ENCODE measurements at regions of chr3 and their contacts with region 1.

Region 1: GRCh38 chr3:66500576-66501482 is at the start of gene LRIG1:
- DNase-seq: peak; percentile 100
- ATAC-seq: peak; percentile 95 to 99 (median 95)
- H3K4me3 ChIP-seq: peak within 1 kb of the TSS; percentile 97
- H3K27ac ChIP-seq: peak within 1 kb of the TSS; percentile 95
- H3K4me1 ChIP-seq: peaks cover 24% of the 10 kb centered on the region
- H3K27me3 ChIP-seq: no peaks in the 10 kb centered on the region
- CTCF ChIP-seq: peak; percentile 20
- total RNA-seq, gene LRIG1: 41.1 to 119 (median 49.8) TPM

Region 2: DNA sequence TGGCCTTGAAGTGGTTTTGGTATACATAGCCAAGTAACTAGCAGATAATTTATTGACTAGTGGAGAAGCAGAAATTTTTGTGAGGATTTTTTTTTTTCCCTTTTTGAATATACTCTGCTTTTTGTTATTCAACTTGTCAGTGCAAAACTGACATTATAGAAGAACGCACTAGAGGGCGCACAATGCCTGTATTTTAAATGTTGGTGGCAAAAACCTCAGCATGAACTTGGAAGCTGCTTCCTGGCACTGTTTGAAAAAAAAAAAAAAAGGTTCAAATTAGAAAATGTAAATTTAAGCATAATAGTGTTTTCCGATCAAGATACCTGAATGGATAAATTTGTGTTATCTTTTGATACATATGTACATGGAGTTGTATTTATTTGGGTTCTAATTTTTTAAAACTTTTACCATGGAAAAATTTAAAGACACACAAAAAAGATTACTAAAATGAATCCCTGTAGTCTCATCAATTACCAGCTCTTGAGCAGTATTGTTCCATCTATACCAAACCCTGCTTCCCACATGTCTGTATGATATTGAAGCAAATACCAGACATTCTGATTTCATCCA is 224.0 kb before region 1 on chr3:
- intact Hi-C with region 1: loop called in 1 of 2 experiments (anchors 5 kb)
- DNase-seq: no peak
- ATAC-seq: peak in 3 of 4 donors; percentile 51 to 89 (median 74)
- H3K4me3 ChIP-seq: no peak overlapping the region
- H3K27ac ChIP-seq: no peak overlapping the region
- H3K4me1 ChIP-seq: peaks cover 11% of the 10 kb centered on the region
- H3K27me3 ChIP-seq: no peaks in the 10 kb centered on the region
- CTCF ChIP-seq: peak; percentile 74

Region 3: GRCh38 chr3:66348704-66349103 is 152.1 kb before region 1 on chr3:
- intact Hi-C with region 1: no loop called
- DNase-seq: no peak
- ATAC-seq: peak; percentile 68 to 95 (median 88)
- H3K4me3 ChIP-seq: no peak overlapping the region
- H3K27ac ChIP-seq: no peak overlapping the region
- H3K4me1 ChIP-seq: peaks cover 11% of the 10 kb centered on the region
- H3K27me3 ChIP-seq: no peaks in the 10 kb centered on the region
- CTCF ChIP-seq: no peak

Region 4: DNA sequence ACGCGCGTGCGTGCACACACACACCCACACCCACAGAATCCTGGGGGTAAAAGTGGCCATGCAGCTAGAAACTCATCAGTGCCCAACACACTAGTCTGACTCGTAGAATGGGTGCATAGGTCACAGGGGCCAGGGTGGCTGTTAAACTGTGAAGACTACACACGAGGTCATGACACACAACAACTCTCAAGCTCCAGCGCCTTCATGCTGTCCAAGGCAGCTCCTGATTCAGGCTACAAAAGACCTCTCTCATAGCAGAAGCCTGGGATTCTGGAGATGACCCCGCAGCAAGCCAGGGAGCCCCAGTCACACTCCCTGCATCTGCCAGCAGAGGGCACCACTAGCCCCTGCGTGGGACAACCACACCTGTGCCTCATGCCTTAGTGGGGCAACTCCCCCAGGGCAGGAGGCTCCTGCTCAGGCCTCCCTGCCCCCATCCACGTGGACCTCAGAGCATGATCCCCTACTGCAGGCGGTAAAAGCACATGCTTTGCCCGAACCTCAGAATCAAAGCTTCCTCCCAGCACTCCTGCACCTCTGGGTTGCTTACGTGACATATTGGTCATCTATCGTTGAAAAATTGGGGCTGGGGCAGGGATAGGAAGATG is 93.1 kb before region 1 on chr3:
- intact Hi-C with region 1: loop called (anchors 5 kb)
- DNase-seq: peak; percentile 78 to 88
- ATAC-seq: peak; percentile 72 to 74 (median 73)
- H3K4me3 ChIP-seq: no peak overlapping the region
- H3K27ac ChIP-seq: peak overlapping the region; percentile 72
- H3K4me1 ChIP-seq: peaks cover 60% of the 10 kb centered on the region
- H3K27me3 ChIP-seq: no peaks in the 10 kb centered on the region
- CTCF ChIP-seq: peak; percentile 93

Region 5: GRCh38 chr3:66450390-66451022 is 50.3 kb before region 1 on chr3:
- intact Hi-C with region 1: loop called in 1 of 2 experiments (anchors 2 kb)
- DNase-seq: peak; percentile 49 to 85
- ATAC-seq: peak; percentile 52 to 67 (median 54)
- H3K4me3 ChIP-seq: peak overlapping the region; percentile 38
- H3K27ac ChIP-seq: peak overlapping the region; percentile 84
- H3K4me1 ChIP-seq: peaks cover 82% of the 10 kb centered on the region
- H3K27me3 ChIP-seq: no peaks in the 10 kb centered on the region
- CTCF ChIP-seq: no peak

Region 6: DNA sequence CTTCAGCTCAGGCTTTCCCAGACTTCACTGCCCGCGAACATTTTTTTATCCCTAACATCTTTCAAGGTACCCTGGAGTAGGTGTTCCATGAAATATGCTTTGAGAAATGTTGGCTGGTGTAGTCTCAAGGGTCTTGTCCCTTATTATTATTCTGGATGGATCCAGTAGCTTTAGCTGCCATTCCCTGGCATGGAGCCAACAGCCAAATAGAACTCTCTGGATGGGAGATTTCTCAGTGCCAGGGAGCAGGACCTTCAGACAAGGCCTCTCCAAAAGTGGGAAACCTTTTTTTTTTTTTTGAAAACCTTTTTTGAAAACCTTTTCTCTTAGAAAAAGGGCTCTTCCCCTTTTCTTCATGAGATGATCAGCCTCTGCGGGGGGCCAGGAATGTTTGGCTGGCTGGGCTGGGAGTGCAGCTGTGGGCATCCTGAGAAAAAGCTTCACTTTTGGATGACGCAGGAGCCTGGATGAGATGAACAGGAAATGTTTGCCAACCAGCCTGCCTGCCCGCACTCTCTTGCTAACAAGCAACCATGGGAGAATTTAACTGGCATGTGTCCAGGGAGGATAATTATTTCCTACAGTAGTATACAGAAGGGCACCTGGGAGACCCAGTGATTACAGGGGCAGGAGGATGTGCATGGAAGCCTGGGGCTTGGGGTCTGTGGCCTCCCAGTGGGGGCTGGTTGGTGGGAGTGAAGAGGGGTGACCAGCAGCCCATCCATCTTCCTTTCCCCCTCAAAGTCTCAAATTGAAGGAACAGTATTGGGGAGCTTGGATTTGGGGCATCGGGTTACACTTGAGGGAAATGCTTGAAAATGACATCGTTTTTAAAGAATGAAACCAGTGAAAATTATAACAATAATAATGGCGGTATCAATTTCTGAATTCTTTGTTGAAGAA is 109.1 kb after region 1 on chr3:
- intact Hi-C with region 1: loop called in 1 of 2 experiments (anchors 10 kb)
- DNase-seq: no peak
- ATAC-seq: peak in 1 of 4 donors; percentile 53
- H3K4me3 ChIP-seq: no peak overlapping the region
- H3K27ac ChIP-seq: no peak overlapping the region
- H3K4me1 ChIP-seq: no peaks in the 10 kb centered on the region
- H3K27me3 ChIP-seq: no peaks in the 10 kb centered on the region
- CTCF ChIP-seq: no peak

Region 7: GRCh38 chr3:66693461-66694031 is 192.7 kb after region 1 on chr3:
- intact Hi-C with region 1: loop called in 1 of 2 experiments (anchors 5 kb)
- DNase-seq: peak; percentile 34 to 68
- ATAC-seq: peak; percentile 93 to 98 (median 96)
- H3K4me3 ChIP-seq: peak overlapping the region; percentile 50
- H3K27ac ChIP-seq: peak overlapping the region; percentile 83
- H3K4me1 ChIP-seq: peaks cover 18% of the 10 kb centered on the region
- H3K27me3 ChIP-seq: no peaks in the 10 kb centered on the region
- CTCF ChIP-seq: no peak

Region 8: DNA sequence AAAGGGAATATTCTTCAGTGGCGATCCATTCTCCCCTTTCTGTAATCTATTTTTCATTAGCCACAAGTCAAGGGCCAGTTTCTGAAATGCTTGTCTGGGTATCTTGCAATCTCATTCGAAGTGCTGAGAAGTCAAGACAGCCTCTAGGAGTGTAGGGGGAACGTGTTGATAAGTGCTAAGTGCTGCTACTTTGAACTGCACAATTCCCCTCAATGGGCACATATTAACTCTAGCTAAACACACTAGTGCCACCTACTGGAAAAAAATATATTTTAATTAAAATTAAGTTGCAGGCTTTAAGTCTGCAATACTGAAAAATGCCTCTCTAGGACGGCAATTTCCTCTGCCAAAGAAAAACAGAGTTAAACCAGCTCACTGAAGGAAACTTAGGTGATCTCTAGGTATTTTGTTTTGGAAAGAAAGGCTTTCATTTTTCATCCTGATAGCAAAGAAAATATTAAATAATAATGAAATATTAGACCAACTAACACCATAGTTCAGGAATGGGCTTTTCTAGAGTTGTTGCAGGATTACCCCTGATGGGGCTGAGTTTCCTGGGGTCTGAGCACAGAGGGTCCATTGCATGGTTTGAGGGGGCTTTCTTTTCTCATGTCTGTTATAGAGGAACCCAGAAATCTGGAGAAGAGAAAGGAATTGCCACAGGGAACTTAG is 315.4 kb after region 1 on chr3:
- intact Hi-C with region 1: loop called (anchors 5 to 10 kb)
- DNase-seq: no peak
- ATAC-seq: peak; percentile 84 to 95 (median 89)
- H3K4me3 ChIP-seq: no peak overlapping the region
- H3K27ac ChIP-seq: no peak overlapping the region
- H3K4me1 ChIP-seq: no peaks in the 10 kb centered on the region
- H3K27me3 ChIP-seq: no peaks in the 10 kb centered on the region
- CTCF ChIP-seq: peak; percentile 72

Measured in psoas muscle (tissue), 8 donors.